ENCODE measurements at regions of chr4 and their contacts with region 1.

Region 1: DNA sequence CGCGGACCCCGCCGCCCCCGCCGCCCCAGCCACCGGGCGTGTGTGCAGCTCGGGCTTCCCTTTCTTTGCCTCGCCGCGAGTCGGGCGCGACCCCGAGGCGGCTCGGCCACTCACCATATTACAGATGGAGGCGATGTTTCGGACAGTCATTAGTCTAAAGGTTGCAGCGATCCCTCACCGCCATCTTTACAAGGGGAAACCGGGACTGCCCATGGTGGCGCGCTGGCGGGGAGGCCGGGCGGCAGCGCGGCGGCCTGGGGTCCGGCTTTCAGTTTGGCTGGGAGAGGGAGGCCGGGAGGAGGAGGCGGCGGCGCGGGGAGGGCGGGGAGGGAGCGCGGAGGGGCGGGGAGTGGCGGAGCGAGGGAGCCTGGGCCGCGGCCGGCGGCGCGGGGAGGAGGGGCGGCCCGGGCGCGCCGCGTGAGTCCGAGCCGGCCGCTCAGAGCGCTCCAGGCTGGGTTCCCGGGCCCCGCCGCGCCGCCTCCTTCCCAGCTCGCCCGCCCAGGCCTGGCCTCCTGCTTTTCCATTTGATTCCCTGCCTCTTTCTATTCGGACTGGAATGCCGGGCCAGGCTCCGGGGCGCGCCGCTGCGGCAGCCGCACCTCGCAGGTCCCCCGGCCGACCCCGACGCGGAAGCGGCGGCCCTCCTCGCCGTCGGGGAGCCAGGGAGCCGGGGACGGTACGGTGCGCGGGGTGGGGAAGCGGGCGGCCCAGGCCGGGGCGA is at the start of gene USP46:
- DNase-seq: peak; percentile 66
- H3K4me3 ChIP-seq: peak within 1 kb of the TSS; percentile 80 to 90 (median 88)
- H3K27ac ChIP-seq: peak within 1 kb of the TSS; percentile 86
- H3K4me1 ChIP-seq: peaks cover 13% of the 10 kb centered on the region
- H3K27me3 ChIP-seq: no peaks in the 10 kb centered on the region
- CTCF ChIP-seq: no peak
- POLR2A ChIP-seq: peak; percentile 85
- total RNA-seq, gene USP46: 23.3 and 23.7 TPM in 2 replicates

Region 2: DNA sequence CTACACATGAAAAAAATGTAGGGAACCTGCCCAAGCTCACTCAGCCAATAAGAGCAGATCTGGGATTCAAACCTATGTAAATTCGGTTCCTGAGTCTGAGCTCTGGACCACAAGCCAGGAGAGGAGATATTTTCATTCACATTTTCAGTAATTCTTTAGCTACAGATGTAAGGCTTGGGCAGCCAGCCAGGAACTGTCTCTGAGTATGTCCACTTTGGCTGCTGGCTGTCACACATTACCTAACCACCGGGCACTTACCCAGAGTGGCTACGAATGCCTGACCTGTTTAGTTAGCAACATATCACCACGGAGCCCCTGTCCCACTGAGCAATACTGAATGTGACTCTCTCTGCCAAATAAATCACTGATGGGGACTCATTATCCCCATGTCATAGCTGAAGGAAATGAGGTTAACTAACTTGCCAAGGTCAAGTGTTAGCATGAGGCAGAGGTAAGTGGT is 15.3 kb before region 1 on chr4:
- CTCF ChIA-PET with region 1: interaction called, 7 read pairs
- POLR2A ChIA-PET with region 1: interaction called, 7 read pairs
- dilution Hi-C with region 1: no loop called
- intact Hi-C with region 1: loop called (anchors 1 kb)
- DNase-seq: peak; percentile 44
- H3K4me3 ChIP-seq: no peak overlapping the region
- H3K27ac ChIP-seq: no peak overlapping the region
- H3K4me1 ChIP-seq: peaks cover 33% of the 10 kb centered on the region
- H3K27me3 ChIP-seq: no peaks in the 10 kb centered on the region
- CTCF ChIP-seq: no peak
- POLR2A ChIP-seq: no peak

Region 3: DNA sequence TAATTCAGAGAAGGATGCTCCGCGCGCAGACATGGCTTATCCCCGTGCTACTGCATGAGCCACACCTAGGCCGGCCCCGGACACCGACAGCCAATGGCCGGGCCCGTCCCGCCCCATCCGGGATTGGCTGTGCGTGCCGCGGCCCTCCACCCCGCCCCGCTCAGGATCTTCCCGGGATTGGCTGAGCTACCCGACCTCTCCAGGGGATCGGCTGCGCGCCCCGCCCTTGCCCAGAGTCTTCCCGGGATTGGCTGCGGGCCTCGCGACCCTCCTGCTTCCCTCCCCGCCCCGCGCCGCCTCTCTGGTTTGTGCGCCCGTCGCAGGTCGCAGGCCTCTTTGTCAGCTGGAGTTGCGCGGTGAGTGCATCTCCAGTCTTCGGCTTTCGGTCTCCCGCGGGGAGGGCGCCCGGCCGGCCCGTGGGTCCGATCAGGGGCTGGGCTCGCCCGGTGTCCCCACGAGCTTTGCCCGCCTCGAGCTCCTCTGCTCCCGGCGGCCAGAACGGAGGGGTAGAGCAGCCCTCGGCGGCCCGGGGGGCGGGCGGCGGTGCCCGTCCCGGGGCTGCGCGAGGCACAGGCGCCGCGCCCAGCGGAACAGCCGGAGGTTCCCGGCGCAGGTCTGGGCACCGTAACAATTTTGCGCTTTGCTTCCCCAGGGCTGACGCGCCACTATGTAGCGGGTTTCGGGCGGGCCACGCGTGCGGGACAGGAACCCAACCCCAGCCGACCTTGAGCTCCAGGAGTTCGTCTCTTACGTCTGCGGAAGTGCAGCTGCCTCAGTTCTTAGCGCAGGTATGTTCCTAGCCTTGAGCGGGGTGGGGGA is 53.2 kb after region 1 on chr4:
- CTCF ChIA-PET with region 1: interaction called, 11 read pairs
- POLR2A ChIA-PET with region 1: interaction called, 10 read pairs
- dilution Hi-C with region 1: no loop called
- intact Hi-C with region 1: loop called (anchors 2 kb)
- DNase-seq: peak; percentile 97
- H3K4me3 ChIP-seq: peak overlapping the region; percentile 61 to 86 (median 76)
- H3K27ac ChIP-seq: peak overlapping the region; percentile 73
- H3K4me1 ChIP-seq: peaks cover 30% of the 10 kb centered on the region
- H3K27me3 ChIP-seq: peaks cover 0 to 5% of the 10 kb centered on the region in 2 experiments
- CTCF ChIP-seq: no peak
- POLR2A ChIP-seq: peak; percentile 97

Region 4: DNA sequence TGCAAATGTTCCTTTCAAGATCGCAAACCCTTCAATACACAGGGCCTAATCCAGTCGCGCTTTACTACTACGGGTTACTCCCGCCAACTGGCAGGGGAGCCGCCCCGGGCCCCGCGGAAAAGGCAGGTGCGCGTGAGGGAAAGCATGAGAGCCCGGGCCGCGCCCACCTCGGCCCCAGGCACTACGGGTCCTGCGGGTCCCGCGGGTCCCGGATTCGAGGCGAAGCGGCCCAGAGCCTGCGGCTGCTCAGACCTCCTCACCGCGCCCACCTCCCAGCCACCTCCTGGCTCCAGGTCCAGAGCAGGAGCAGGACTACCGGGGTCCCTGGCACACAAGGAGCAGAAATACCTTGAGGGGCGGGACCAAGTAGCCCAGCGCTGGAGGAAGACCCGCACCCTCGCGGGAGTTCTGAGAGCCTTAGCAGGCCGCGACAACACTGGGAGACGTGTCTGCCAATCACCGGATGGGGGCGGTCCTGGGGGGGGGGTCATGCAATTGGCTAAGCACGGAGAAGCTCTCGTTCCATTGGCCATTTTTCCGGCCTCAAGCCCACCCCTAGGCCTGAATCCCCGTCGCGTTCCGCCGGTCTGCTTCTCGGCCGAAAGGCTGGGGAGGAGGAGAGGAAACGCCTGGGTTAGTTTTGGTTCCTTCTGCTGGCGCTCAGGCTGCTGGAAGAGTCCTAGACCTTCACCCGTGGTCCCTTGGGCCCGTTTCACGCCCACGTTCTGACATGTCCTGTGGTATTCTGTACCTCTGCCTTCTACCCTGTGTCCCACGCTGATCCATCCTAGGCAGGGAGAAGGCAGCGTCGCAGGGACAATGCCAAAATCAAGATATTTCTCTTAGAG is 63.0 kb after region 1 on chr4:
- CTCF ChIA-PET with region 1: no interaction called
- POLR2A ChIA-PET with region 1: interaction called, 3 read pairs
- dilution Hi-C with region 1: no loop called
- intact Hi-C with region 1: loop called (anchors 2 kb)
- DNase-seq: peak; percentile 98
- H3K4me3 ChIP-seq: peak overlapping the region; percentile 34 to 69 (median 65)
- H3K27ac ChIP-seq: peak overlapping the region; percentile 44
- H3K4me1 ChIP-seq: peaks cover 4% of the 10 kb centered on the region
- H3K27me3 ChIP-seq: no peaks in the 10 kb centered on the region
- CTCF ChIP-seq: no peak
- POLR2A ChIP-seq: peak; percentile 98

Region 5: DNA sequence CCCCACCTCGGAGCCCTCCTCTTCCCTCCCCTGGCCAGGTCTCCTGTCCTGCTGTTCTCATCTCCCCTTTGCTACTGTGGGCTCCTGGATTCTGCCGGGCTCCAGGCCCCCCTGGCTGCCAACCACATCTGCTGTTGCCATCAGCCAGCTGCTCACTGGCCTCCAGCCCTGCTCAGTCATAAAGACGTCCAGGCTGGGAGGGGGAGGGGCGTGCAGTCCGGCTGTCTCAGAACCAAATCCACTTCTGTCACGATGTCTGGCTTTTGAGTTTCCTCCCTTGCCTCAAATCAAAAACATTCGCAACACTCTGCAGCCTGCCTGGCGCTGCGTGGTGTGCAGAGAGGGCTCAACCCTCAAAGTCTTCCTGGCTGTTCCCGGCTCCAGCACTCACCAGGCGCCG is 210.0 kb after region 1 on chr4:
- CTCF ChIA-PET with region 1: no interaction called
- POLR2A ChIA-PET with region 1: no interaction called
- dilution Hi-C with region 1: no loop called
- intact Hi-C with region 1: loop called (anchors 5 kb)
- DNase-seq: no peak
- H3K4me3 ChIP-seq: no peak overlapping the region
- H3K27ac ChIP-seq: no peak overlapping the region
- H3K4me1 ChIP-seq: no peaks in the 10 kb centered on the region
- H3K27me3 ChIP-seq: peaks cover 5 to 9% of the 10 kb centered on the region in 2 experiments
- CTCF ChIP-seq: no peak
- POLR2A ChIP-seq: no peak

Region 6: GRCh38 chr4:53132132-53132896 is 473.2 kb after region 1 on chr4:
- CTCF ChIA-PET with region 1: no interaction called
- POLR2A ChIA-PET with region 1: no interaction called
- dilution Hi-C with region 1: no loop called
- intact Hi-C with region 1: loop called (anchors 10 kb)
- DNase-seq: no peak
- H3K4me3 ChIP-seq: no peak overlapping the region
- H3K27ac ChIP-seq: no peak overlapping the region
- H3K4me1 ChIP-seq: peaks cover 10% of the 10 kb centered on the region
- H3K27me3 ChIP-seq: no peaks in the 10 kb centered on the region
- CTCF ChIP-seq: no peak
- POLR2A ChIP-seq: no peak